Activated T-helper 1 cell treated with anti-CD3 and anti-CD28 coated beads, Interleukin-12 subunit alpha, Interleukin-12 subunit beta, Interleukin-2, Interleukin-4 antibody, amounts not matched to agents 30 ng/mL and 10 ng/mL and 1 ng/mL, durations not matched to agents 14 hours and 24 hours and 36 hours (primary cell): ENCODE measurements at regions of chr1 and their contacts with region 1.

Region 1: GRCh38 chr1:172269644-172270043 is 150.8 kb upstream of the C1orf105 start:
- DNase-seq: no peak
- H3K4me3 Mint-ChIP-seq: peak overlapping the region; percentile 43
- H3K27ac Mint-ChIP-seq: peak overlapping the region; percentile 82
- H3K4me1 Mint-ChIP-seq: peaks cover 64% of the 10 kb centered on the region
- H3K27me3 Mint-ChIP-seq: no peaks in the 10 kb centered on the region

Region 2: GRCh38 chr1:172135076-172135672 is 134.5 kb before region 1 on chr1:
- intact Hi-C with region 1: loop called (anchors 5 kb)
- DNase-seq: no peak
- H3K4me3 Mint-ChIP-seq: no peak overlapping the region
- H3K27ac Mint-ChIP-seq: no peak overlapping the region
- H3K4me1 Mint-ChIP-seq: peaks cover 19% of the 10 kb centered on the region
- H3K27me3 Mint-ChIP-seq: no peaks in the 10 kb centered on the region

Region 3: DNA sequence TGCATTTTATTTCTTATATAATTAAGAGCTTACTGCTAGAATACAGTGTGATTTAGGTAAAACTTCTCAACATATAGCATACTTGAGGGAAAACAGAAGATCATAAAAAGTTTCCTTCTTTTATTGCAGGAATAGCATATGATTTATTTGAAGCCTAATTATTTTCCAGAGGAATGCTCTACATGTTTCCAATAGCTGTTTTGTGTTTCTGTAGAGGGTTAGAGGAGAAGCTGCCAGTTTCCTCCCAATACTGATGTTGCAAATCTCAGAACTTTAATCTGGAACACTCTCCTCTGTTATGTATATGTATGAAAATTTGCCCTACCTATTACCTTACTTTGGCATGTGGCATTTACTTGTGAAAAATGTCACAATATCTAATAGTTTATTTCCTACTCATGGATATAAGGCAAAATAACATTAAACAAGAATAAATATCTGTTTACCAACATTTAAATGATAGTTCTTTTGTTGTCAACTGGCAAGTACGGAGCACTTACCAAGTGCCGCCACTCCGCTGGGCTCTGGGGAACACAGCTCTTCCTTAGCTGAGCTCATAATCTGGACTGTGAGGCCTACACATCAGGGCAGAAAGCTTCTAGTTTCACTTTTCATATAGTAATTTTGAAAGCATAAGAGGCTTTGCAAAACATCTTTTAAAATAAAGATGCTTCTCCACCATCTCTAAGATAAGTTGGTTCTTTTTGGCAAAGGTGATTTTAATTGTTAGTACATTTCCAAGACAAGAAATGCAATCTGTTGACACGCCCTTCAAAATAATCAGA is 89.0 kb before region 1 on chr1:
- intact Hi-C with region 1: loop called (anchors 1 kb)
- DNase-seq: peak; percentile 22
- H3K4me3 Mint-ChIP-seq: peak overlapping the region; percentile 75
- H3K27ac Mint-ChIP-seq: peak overlapping the region; percentile 94
- H3K4me1 Mint-ChIP-seq: peaks cover 50% of the 10 kb centered on the region
- H3K27me3 Mint-ChIP-seq: no peaks in the 10 kb centered on the region

Region 4: GRCh38 chr1:172357753-172358385 is 88.2 kb after region 1 on chr1:
- intact Hi-C with region 1: loop called (anchors 1 kb)
- DNase-seq: no peak
- H3K4me3 Mint-ChIP-seq: peak overlapping the region; percentile 6
- H3K27ac Mint-ChIP-seq: peak overlapping the region; percentile 83
- H3K4me1 Mint-ChIP-seq: peaks cover 56% of the 10 kb centered on the region
- H3K27me3 Mint-ChIP-seq: no peaks in the 10 kb centered on the region

Region 5: GRCh38 chr1:172398970-172399755 is 129.5 kb after region 1 on chr1:
- intact Hi-C with region 1: loop called (anchors 1 kb)
- DNase-seq: no peak
- H3K4me3 Mint-ChIP-seq: no peak overlapping the region
- H3K27ac Mint-ChIP-seq: peak overlapping the region; percentile 4
- H3K4me1 Mint-ChIP-seq: peaks cover 52% of the 10 kb centered on the region
- H3K27me3 Mint-ChIP-seq: no peaks in the 10 kb centered on the region

Region 6: GRCh38 chr1:172708452-172708851 is 438.8 kb after region 1 on chr1:
- intact Hi-C with region 1: loop called (anchors 1 kb)
- DNase-seq: peak; percentile 53
- H3K4me3 Mint-ChIP-seq: peak overlapping the region; percentile 50
- H3K27ac Mint-ChIP-seq: peak overlapping the region; percentile 86
- H3K4me1 Mint-ChIP-seq: peaks cover 18% of the 10 kb centered on the region
- H3K27me3 Mint-ChIP-seq: no peaks in the 10 kb centered on the region